ENCODE measurements at regions of chr6 and their contacts with region 1.

Region 1: DNA sequence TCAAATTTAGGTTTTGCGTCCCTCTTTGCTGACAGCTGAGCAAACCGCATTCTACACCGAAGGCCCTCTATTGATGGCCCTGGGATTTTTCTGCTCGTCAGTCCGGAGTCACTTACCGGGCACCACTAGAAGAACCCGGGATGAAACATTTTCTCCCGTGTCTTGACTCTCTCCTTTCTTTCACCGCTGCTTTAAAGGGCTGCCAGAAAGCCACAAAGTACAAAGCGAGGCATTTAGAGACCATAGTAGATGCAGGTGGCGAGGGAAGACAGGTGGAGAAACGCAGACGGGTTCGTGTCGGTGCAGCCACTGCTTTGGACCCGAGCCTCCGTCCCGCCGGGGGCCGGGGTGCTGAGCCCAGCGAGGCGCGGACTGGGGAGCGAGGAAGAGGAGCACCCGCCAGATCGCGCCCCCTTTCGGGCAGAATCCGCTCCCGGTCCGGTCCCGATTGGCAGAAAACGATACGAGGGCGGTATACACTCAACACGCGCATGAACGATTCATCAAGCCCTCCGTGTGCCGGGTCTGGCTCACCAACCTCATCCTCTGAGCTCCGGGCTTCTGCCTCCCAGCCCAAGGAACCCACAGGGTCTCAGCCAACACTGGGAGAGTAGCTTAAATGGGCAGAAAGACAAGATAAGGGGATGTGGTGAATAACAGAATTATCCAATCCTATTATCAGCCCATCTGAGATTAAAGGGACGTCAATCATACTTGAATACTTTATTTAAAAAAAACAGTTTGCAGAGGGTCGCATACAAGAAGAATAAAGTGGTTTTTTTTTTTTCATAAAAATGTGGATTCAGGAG is 84.9 kb downstream of the TRIM27 start:
- DNase-seq: peak; percentile 90
- ATAC-seq: peak; percentile 85
- H3K4me3 Mint-ChIP-seq: peak overlapping the region; percentile 88
- H3K27ac Mint-ChIP-seq: peak overlapping the region; percentile 77
- H3K4me1 Mint-ChIP-seq: peaks cover 25% of the 10 kb centered on the region
- H3K27me3 Mint-ChIP-seq: peaks cover 61% of the 10 kb centered on the region

Region 2: GRCh38 chr6:28408076-28408802 is 430.6 kb before region 1 on chr6:
- CTCF ChIA-PET with region 1: no interaction called
- DNase-seq: no peak
- ATAC-seq: no peak
- H3K4me3 Mint-ChIP-seq: no peak overlapping the region
- H3K27ac Mint-ChIP-seq: no peak overlapping the region
- H3K4me1 Mint-ChIP-seq: peaks cover 28% of the 10 kb centered on the region
- H3K27me3 Mint-ChIP-seq: peaks cover 42% of the 10 kb centered on the region

Region 3: GRCh38 chr6:28742668-28743270 is 96.1 kb before region 1 on chr6:
- CTCF ChIA-PET with region 1: no interaction called
- DNase-seq: no peak
- ATAC-seq: no peak
- H3K4me3 Mint-ChIP-seq: no peak overlapping the region
- H3K27ac Mint-ChIP-seq: no peak overlapping the region
- H3K4me1 Mint-ChIP-seq: peaks cover 8% of the 10 kb centered on the region
- H3K27me3 Mint-ChIP-seq: peaks cover 53% of the 10 kb centered on the region

Region 4: GRCh38 chr6:28769626-28770402 is 69.0 kb before region 1 on chr6:
- CTCF ChIA-PET with region 1: no interaction called
- DNase-seq: no peak
- ATAC-seq: no peak
- H3K4me3 Mint-ChIP-seq: no peak overlapping the region
- H3K27ac Mint-ChIP-seq: no peak overlapping the region
- H3K4me1 Mint-ChIP-seq: no peaks in the 10 kb centered on the region
- H3K27me3 Mint-ChIP-seq: peaks cover 92% of the 10 kb centered on the region

Region 5: GRCh38 chr6:28863604-28864320 is 24.9 kb after region 1 on chr6:
- CTCF ChIA-PET with region 1: interaction called, 48 read pairs
- DNase-seq: peak; percentile 91
- ATAC-seq: peak; percentile 45
- H3K4me3 Mint-ChIP-seq: peak overlapping the region; percentile 87
- H3K27ac Mint-ChIP-seq: peak overlapping the region; percentile 84
- H3K4me1 Mint-ChIP-seq: peaks cover 54% of the 10 kb centered on the region
- H3K27me3 Mint-ChIP-seq: peaks cover 20% of the 10 kb centered on the region

Region 6: DNA sequence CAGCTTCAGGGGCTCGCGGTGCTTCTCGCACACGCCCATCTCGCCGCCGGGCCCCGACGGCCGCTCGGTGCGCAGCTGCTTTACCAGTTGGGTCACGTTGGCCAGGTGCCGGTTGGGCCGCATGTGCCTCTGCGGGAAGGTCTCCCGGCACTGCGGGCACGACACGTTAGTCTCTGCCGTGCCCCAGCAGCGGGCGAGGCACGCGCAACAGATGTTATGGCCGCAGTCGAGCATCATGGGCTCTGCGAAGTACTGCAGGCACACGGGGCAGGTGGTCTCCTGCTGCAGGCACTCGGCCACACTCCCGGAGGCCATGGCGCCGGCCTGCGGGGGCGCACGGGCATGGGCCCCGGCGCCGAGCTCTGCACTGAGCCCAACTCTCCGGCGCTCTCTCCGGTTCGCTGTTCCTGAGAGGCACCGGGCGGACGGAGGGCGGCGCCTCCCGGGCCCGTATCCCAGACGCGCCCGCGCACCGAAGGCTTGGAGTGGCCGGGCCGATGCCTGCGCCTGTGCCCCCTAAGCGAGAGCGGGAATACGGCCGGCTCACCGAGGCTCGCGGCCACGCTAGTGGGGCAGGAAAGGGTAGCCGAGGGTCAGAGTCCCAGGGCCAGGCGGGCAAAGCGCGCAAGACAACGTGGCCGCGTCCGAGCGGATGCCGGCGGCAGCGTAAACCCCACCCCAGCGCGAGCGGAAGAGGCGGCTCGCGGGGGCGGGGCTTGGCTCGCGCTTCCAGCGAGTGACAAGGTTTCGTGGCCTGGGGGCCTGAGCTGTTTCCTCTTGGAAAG is 84.7 kb after region 1 on chr6 and contains the start of gene TRIM27:
- CTCF ChIA-PET with region 1: interaction called, 14 read pairs
- DNase-seq: peak; percentile 86
- ATAC-seq: peak; percentile 86
- H3K4me3 Mint-ChIP-seq: peak within 1 kb of the TSS; percentile 93
- H3K27ac Mint-ChIP-seq: peak within 1 kb of the TSS; percentile 93
- H3K4me1 Mint-ChIP-seq: peaks cover 41% of the 10 kb centered on the region
- H3K27me3 Mint-ChIP-seq: peaks cover 3% of the 10 kb centered on the region
- total RNA-seq, gene TRIM27: 52.5 to 62.9 TPM

Region 7: DNA sequence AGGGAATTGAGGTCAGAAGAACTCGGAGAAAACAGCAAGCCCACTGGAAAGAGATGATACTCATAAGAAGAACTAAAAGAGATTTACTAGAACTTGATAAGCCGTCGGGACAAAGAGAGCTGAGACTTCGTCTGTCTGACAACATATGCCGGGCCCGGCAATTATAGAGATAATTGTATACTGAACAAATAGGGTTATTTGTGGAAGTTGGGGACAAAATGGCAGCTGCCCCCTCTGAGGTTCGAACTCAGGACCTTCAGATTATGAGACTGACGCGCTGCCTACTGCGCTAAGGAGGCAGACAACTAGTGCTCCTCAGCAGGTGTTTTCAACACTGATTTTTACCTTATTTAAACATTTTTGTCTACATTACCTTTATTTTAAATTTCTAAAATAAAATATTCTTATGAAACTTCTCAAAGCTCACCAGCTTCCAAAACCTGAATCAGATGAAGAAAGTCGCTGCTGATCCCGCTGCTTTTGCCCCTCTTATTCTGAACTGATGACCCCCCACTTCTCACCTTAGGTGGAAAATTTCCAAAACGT is 114.3 kb after region 1 on chr6:
- CTCF ChIA-PET with region 1: interaction called, 11 read pairs
- DNase-seq: peak; percentile 75
- ATAC-seq: peak; percentile 83
- H3K4me3 Mint-ChIP-seq: peak overlapping the region; percentile 77
- H3K27ac Mint-ChIP-seq: peak overlapping the region; percentile 48
- H3K4me1 Mint-ChIP-seq: peaks cover 29% of the 10 kb centered on the region
- H3K27me3 Mint-ChIP-seq: peaks cover 7% of the 10 kb centered on the region

Region 8: GRCh38 chr6:29005183-29005885 is 166.5 kb after region 1 on chr6 and contains the start of gene ZNF311:
- CTCF ChIA-PET with region 1: interaction called, 15 read pairs
- DNase-seq: peak; percentile 67
- ATAC-seq: peak; percentile 97
- H3K4me3 Mint-ChIP-seq: peak within 1 kb of the TSS; percentile 74
- H3K27ac Mint-ChIP-seq: peak within 1 kb of the TSS; percentile 84
- H3K4me1 Mint-ChIP-seq: peaks cover 21% of the 10 kb centered on the region
- H3K27me3 Mint-ChIP-seq: peaks cover 21% of the 10 kb centered on the region
- total RNA-seq, gene ZNF311: 0.26 to 0.40 TPM

Measured in activated CD8-positive, alpha-beta memory T cell treated with anti-CD3 and anti-CD28 coated beads, Interleukin-2, amount 10 ng/mL, durations not matched to agents 7 days and 5 days (primary cell).